ENCODE measurements at regions of chr3 and their contacts with region 1.

Region 1: GRCh38 chr3:157081681-157082210 is 78.2 kb downstream of the CCNL1 start:
- DNase-seq: peak; percentile 90
- H3K4me3 Mint-ChIP-seq: no peak overlapping the region
- H3K27ac Mint-ChIP-seq: peak overlapping the region; percentile 94
- H3K4me1 Mint-ChIP-seq: peaks cover 23% of the 10 kb centered on the region
- H3K27me3 Mint-ChIP-seq: no peaks in the 10 kb centered on the region
- CTCF ChIP-seq: peak; percentile 97

Region 2: GRCh38 chr3:156554842-156555687 is 526.7 kb before region 1 on chr3 and contains the start of gene SSR3:
- CTCF ChIA-PET with region 1: interaction called, 12 read pairs
- POLR2A ChIA-PET with region 1: interaction called, 28 read pairs
- intact Hi-C with region 1: loop called (anchors 1 kb)
- DNase-seq: peak; percentile 99
- H3K4me3 Mint-ChIP-seq: peak within 1 kb of the TSS; percentile 89
- H3K27ac Mint-ChIP-seq: peak within 1 kb of the TSS; percentile 92
- H3K4me1 Mint-ChIP-seq: peaks cover 30% of the 10 kb centered on the region
- H3K27me3 Mint-ChIP-seq: no peaks in the 10 kb centered on the region
- CTCF ChIP-seq: peak; percentile 8
- total RNA-seq, gene SSR3: 447 and 568 TPM in 2 replicates

Region 3: DNA sequence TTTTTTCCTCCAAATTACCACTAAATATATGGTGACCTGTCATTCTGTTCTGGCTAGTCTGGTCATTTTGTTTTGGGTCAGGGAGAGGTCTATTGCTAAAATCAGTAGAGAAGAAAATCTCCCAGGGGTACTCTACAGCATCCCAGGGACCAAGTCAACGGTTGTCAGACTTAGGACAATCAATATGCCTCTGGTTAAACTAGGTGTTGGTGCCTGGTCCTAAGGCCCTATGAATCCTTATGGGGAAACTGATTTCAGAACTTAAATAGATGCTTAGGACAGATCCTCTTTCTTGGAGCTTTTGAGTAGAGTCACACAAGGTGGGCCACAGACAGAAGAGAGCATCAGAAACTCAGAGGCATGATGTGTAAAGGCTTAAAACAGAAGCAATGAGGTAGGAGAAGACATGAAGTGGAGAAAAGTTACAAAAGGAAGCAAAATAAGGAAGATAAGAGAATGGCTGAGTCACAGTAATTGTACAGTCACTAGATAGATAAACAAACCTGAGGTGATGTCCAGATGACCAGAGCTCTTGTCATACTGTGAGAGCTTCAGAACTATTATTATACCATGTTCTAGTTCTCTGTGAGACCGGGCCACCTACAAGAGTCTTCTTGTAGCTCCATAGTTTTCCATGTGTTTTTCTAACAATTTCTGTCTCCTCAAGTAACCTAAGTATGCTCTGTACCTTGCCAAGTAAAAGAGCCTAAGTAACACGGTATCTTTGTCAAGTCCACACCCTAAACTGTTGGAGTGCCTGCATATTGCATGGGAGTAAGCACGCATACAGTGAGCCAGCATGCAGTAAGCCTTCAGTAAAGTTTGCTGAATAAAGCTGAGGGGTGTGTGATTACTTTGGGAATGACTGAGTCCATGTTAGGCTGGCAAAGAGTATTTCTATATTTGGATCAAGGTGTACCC is 300.2 kb before region 1 on chr3:
- CTCF ChIA-PET with region 1: interaction called, 5 read pairs
- POLR2A ChIA-PET with region 1: interaction called, 11 read pairs
- intact Hi-C with region 1: loop called (anchors 10 kb)
- DNase-seq: peak; percentile 39
- H3K4me3 Mint-ChIP-seq: no peak overlapping the region
- H3K27ac Mint-ChIP-seq: peak overlapping the region; percentile 83
- H3K4me1 Mint-ChIP-seq: peaks cover 41% of the 10 kb centered on the region
- H3K27me3 Mint-ChIP-seq: no peaks in the 10 kb centered on the region
- CTCF ChIP-seq: no peak

Region 4: DNA sequence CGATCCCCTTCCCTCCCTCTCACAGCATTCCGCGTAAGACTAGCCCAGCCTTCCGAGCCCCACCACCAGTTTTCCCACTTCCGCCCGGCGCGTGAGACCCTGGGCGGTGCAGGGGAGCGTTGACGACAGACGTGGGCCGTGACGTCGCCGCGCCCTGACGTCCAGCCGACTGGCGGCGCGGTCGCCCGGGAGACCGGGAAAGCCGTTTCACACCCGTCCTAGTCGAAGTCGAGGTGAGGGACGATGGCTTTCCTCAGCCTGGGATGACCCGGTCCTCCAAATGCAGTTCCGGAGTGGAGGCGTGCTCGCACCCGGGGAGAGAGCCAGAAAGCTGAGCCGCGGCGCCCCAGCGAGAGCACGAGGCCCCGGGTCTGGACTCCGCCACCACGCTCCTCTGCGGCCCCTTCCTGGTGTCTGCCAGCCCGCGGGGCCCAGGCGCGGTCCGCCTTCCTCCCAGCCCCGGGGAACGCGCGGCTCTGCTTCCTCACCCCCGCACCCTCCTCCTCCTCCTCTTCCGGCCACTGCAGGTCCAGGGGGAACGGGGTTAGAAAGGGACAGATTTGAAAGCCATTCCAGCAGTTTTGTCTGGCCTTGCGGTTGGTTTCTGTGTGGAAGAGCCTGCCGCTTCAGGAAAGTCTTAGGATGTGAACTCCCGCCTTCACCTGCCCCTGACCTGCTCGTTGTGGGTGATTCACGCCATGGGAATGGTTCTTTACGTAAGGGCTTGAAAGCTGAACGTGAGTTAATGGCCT is 255.4 kb before region 1 on chr3 and contains the start of gene LEKR1:
- CTCF ChIA-PET with region 1: no interaction called
- POLR2A ChIA-PET with region 1: interaction called, 10 read pairs
- intact Hi-C with region 1: loop called (anchors 1 kb)
- DNase-seq: peak; percentile 88
- H3K4me3 Mint-ChIP-seq: peak within 1 kb of the TSS; percentile 94
- H3K27ac Mint-ChIP-seq: peak within 1 kb of the TSS; percentile 98
- H3K4me1 Mint-ChIP-seq: no peaks in the 10 kb centered on the region
- H3K27me3 Mint-ChIP-seq: no peaks in the 10 kb centered on the region
- CTCF ChIP-seq: no peak
- total RNA-seq, gene LEKR1: 1.3 and 2.2 TPM in 2 replicates

Region 5: GRCh38 chr3:157122116-157122515 is 40.4 kb after region 1 on chr3:
- CTCF ChIA-PET with region 1: interaction called, 35 read pairs
- POLR2A ChIA-PET with region 1: interaction called, 331 read pairs
- intact Hi-C with region 1: no loop called
- DNase-seq: peak; percentile 80
- H3K4me3 Mint-ChIP-seq: no peak overlapping the region
- H3K27ac Mint-ChIP-seq: peak overlapping the region; percentile 82
- H3K4me1 Mint-ChIP-seq: peaks cover 31% of the 10 kb centered on the region
- H3K27me3 Mint-ChIP-seq: no peaks in the 10 kb centered on the region
- CTCF ChIP-seq: no peak

Region 6: DNA sequence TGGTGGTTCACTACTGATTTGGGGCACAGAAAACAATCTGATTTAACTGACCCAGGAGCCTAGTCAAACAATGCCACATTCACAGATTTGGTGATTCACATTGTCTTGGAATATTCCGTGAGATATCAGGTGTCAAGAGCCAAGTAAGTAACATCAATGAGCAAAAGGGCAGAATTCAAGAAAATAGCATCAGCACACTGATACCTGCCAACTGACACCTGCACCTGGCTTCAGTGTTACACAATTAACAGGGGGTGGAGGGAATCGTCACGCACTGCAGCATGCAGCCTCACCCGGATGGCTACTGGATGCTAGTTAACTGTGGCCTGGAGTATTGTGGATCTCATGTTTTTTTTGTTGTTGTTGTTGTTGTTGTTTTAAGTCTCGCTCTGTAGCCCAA is 60.6 kb after region 1 on chr3:
- CTCF ChIA-PET with region 1: interaction called, 260 read pairs
- POLR2A ChIA-PET with region 1: interaction called, 331 read pairs
- intact Hi-C with region 1: no loop called
- DNase-seq: peak; percentile 34
- H3K4me3 Mint-ChIP-seq: no peak overlapping the region
- H3K27ac Mint-ChIP-seq: no peak overlapping the region
- H3K4me1 Mint-ChIP-seq: peaks cover 4% of the 10 kb centered on the region
- H3K27me3 Mint-ChIP-seq: no peaks in the 10 kb centered on the region
- CTCF ChIP-seq: no peak

Region 7: DNA sequence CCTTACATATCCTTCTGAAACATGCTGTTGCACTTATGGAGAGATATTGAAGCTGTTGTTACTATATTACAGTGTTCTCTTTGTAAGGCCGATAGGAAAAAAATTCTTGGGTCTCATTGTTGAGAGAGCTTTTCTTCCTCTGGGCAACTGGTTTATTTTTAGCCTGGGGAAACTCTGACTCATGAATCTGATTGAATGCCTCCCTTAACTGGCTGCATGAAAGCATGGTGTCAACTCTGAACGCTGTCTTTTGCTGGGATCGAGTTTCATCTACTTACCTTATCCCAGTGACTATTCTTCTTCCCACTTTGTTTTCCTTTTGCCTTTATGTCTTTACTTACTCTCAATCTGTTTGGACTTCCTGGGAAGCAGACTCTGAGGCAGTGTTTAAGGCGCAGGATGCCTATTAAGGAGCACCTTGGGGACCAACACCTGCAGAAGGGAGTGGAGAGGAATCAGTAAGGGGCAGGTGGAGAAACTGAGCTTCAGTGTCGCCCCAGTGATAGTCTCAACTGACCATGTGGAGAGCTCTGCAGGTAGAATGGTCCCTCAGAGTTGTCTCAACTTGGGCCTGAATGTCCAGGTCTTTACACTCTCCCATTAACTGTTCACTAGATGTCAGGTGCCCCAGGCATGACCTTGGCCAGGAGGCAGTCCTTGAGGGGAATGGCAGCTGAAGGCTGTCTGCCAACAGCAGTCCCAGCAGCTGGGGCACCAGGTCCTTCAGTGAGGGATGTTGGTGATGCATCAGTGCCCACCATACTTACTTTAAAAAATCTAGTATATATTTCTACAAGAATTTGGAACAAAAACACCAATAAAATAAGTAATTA is 167.1 kb after region 1 on chr3:
- CTCF ChIA-PET with region 1: no interaction called
- POLR2A ChIA-PET with region 1: no interaction called
- intact Hi-C with region 1: no loop called
- DNase-seq: peak; percentile 81
- H3K4me3 Mint-ChIP-seq: no peak overlapping the region
- H3K27ac Mint-ChIP-seq: no peak overlapping the region
- H3K4me1 Mint-ChIP-seq: peaks cover 6% of the 10 kb centered on the region
- H3K27me3 Mint-ChIP-seq: no peaks in the 10 kb centered on the region
- CTCF ChIP-seq: no peak

Region 8: DNA sequence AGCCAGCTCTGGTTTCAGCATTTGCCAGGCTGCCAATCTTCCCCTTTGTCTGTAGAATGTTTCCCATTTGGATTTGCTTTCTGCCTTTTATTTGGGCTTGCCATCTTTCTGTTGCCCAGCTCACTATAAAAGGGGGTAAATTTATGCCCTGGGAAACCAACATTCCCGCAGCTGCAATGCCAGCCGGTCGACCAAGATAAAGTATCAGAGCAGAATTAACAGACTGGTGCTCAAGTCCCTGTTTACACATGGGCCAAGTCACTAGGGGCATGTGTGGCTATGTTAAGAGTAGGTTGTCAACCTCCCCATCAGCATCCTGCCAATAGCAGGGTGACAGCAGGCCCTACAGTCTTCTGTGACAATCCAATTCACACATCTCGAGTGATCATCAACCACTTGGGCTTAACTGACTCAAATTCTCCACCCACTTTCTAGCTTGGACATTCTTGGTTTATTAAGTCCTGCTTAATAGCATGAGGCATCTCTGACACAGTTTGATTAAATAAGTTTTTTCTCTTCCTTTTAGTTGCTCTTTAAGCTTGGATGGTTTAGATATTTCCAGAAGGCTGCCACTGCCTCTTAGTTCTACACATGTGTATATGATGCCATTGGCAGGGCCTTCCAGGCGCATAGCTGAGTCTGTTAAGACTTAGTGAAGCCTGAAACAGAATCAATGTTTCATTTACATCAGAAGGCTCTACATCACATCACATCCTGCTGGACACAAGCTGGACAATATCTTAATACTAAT is 445.6 kb after region 1 on chr3:
- CTCF ChIA-PET with region 1: no interaction called
- POLR2A ChIA-PET with region 1: no interaction called
- intact Hi-C with region 1: no loop called
- DNase-seq: no peak
- H3K4me3 Mint-ChIP-seq: no peak overlapping the region
- H3K27ac Mint-ChIP-seq: no peak overlapping the region
- H3K4me1 Mint-ChIP-seq: no peaks in the 10 kb centered on the region
- H3K27me3 Mint-ChIP-seq: no peaks in the 10 kb centered on the region
- CTCF ChIP-seq: no peak

Measured in MCF 10A (cell line).